MCF 10A (cell line): ENCODE measurements at regions of chr9 and their contacts with region 1.

Region 1: GRCh38 chr9:124040935-124041816 is 29.6 kb downstream of the LHX2 start:
- DNase-seq: peak; percentile 29
- H3K4me3 Mint-ChIP-seq: peak overlapping the region; percentile 56
- H3K27ac Mint-ChIP-seq: no peak overlapping the region
- H3K4me1 Mint-ChIP-seq: peaks cover 7% of the 10 kb centered on the region
- H3K27me3 Mint-ChIP-seq: peaks cover 27% of the 10 kb centered on the region
- CTCF ChIP-seq: peak; percentile 97

Region 2: GRCh38 chr9:123544007-123544827 is 497.0 kb before region 1 on chr9:
- CTCF ChIA-PET with region 1: interaction called, 5 read pairs
- POLR2A ChIA-PET with region 1: no interaction called
- intact Hi-C with region 1: loop called (anchors 1 kb)
- DNase-seq: peak; percentile 53
- H3K4me3 Mint-ChIP-seq: no peak overlapping the region
- H3K27ac Mint-ChIP-seq: no peak overlapping the region
- H3K4me1 Mint-ChIP-seq: no peaks in the 10 kb centered on the region
- H3K27me3 Mint-ChIP-seq: no peaks in the 10 kb centered on the region
- CTCF ChIP-seq: peak; percentile 76

Region 3: DNA sequence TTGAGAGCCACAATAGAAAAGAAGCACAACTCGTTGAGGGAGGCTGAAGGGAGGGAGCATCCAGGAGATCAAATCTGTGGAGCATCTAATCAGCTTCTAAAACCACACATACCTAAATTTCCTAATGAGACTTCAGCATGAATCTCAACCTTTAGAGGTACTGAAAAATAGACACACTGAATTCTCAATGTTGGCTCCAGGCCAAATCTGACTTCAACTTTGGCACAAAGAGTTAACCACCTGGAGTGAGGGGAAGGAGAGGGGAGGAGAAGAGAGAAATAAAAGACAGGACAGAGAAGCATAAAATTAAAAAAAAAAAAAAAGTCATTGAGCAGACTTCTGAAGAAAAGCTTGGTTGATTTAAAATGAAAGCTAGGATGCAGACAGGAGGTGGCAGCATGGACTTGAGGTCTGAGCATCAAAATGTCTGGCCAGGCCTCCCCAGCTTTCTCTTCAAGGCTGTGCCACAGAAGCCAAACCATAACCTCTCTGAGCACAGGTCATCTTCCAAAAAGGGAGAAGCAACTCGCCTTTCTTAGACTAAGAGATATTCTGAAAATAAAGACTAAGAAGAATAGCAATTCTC is 316.9 kb before region 1 on chr9:
- CTCF ChIA-PET with region 1: interaction called, 5 read pairs
- POLR2A ChIA-PET with region 1: interaction called, 3 read pairs
- intact Hi-C with region 1: loop called (anchors 2 kb)
- DNase-seq: peak; percentile 18
- H3K4me3 Mint-ChIP-seq: no peak overlapping the region
- H3K27ac Mint-ChIP-seq: no peak overlapping the region
- H3K4me1 Mint-ChIP-seq: no peaks in the 10 kb centered on the region
- H3K27me3 Mint-ChIP-seq: no peaks in the 10 kb centered on the region
- CTCF ChIP-seq: no peak